ENCODE measurements at regions of chr3 and their contacts with region 1.

Region 1: GRCh38 chr3:186413615-186414415 is 51.8 kb upstream of the DGKG start:
- DNase-seq: peak; percentile 66
- H3K4me3 Mint-ChIP-seq: peak overlapping the region; percentile 64
- H3K27ac Mint-ChIP-seq: no peak overlapping the region
- H3K4me1 Mint-ChIP-seq: peaks cover 16% of the 10 kb centered on the region
- H3K27me3 Mint-ChIP-seq: peaks cover 18% of the 10 kb centered on the region

Region 2: GRCh38 chr3:186514296-186515002 is 100.6 kb after region 1 on chr3:
- intact Hi-C with region 1: loop called (anchors 5 kb)
- DNase-seq: no peak
- H3K4me3 Mint-ChIP-seq: peak overlapping the region; percentile 9
- H3K27ac Mint-ChIP-seq: peak overlapping the region; percentile 76
- H3K4me1 Mint-ChIP-seq: peaks cover 41% of the 10 kb centered on the region
- H3K27me3 Mint-ChIP-seq: no peaks in the 10 kb centered on the region